Dendritic cell treated with granulocyte-macrophage colony-stimulating factor and Interleukin-4, amounts not matched to agents 40 ng/mL and 50 ng/mL, for 4 days (primary cell): ENCODE measurements at regions of chr11 and their contacts with region 1.

Region 1: DNA sequence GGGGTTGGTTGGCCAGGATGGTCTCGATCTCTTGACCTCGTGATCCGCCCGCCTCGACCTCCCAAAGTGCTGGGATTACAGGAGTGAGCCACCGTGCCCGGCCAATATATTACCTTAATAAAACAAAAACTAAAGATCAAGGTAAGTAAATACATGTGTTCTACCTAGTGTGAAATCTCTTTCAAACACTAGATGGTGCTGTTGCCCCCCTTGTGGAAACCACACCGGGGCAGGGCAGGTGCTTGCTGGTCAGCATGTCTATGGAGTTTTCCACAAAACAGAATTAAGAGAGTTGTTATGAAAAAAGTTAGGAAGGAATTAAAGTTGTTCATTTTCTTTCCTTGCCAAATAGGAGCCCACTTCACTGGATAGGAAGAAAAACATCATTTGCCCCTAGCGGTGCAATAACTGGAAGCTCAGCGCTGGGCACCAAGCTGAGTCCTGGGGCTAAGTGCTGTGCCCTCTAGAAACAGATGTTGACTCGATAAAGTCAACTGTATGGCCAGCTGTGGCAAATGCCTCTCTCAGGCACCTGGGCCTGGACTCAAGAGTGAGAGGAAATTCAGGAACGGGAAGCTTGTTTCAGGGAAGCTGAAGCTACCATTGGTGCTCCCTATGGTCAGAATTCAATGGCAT is 6.3 kb upstream of the KCNJ5 start:
- H3K4me3 Mint-ChIP-seq: no peak overlapping the region
- H3K27ac Mint-ChIP-seq: no peak overlapping the region
- H3K4me1 Mint-ChIP-seq: peaks cover 10% of the 10 kb centered on the region
- H3K27me3 Mint-ChIP-seq: peaks cover 28% of the 10 kb centered on the region

Region 2: GRCh38 chr11:128948589-128948988 is 63.8 kb after region 1 on chr11:
- intact Hi-C with region 1: loop called (anchors 2 kb)
- H3K4me3 Mint-ChIP-seq: no peak overlapping the region
- H3K27ac Mint-ChIP-seq: no peak overlapping the region
- H3K4me1 Mint-ChIP-seq: no peaks in the 10 kb centered on the region
- H3K27me3 Mint-ChIP-seq: no peaks in the 10 kb centered on the region

Region 3: GRCh38 chr11:128956401-128957201 is 71.8 kb after region 1 on chr11:
- intact Hi-C with region 1: loop called (anchors 1 kb)
- H3K4me3 Mint-ChIP-seq: no peak overlapping the region
- H3K27ac Mint-ChIP-seq: no peak overlapping the region
- H3K4me1 Mint-ChIP-seq: no peaks in the 10 kb centered on the region
- H3K27me3 Mint-ChIP-seq: peaks cover 5% of the 10 kb centered on the region